ENCODE measurements at regions of chr9 and their contacts with region 1.

Region 1: DNA sequence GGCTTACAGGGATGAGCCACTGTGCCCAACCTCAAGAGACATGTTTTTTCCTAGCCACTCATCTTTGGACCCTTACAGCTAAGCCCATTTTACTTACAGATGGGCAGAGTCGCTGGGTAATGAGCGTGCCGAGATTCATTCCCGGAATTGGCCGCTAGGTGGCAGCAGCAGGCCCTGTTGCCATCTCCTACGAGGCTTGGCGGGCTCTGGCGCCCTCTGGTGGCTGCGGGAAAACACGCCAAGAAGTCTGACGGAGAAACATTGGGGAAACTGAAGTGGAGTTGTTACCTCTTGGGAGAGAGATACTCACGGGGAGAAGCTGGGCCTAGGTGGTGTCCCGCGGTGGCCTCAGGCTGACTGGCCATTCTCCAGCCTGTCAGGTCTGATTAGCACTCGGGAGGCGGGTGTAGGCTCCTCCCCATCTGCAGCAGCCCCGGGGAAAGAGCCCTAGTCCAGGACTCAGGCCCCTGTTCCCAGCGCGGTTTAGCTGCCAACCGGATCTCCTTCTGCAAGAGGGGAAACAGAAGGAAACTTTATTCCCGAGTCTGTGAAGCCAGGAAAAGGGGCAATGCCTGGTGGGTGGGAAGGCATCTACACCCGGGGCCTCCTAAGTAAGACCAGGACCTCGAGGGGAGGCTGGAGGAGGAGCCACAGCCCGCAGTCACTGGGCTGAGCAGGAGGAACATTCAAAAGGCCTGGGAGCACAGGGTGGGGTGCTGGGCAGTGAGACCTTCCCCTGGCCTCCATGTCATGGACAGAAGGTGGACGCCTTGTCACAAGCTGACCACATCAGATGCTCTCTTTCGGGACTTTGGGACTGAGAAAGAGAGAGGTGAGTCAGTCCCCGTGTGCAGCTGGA is 9.7 kb downstream of the PTGES2 start:
- DNase-seq: peak; percentile 92 to 95
- H3K4me3 ChIP-seq: no peak overlapping the region
- H3K27ac ChIP-seq: no peak overlapping the region
- H3K4me1 ChIP-seq: peaks cover 0 to 5% of the 10 kb centered on the region in 2 donors
- H3K27me3 ChIP-seq: no peaks in the 10 kb centered on the region
- CTCF ChIP-seq: peak; percentile 100
- POLR2A ChIP-seq: no peak

Region 2: DNA sequence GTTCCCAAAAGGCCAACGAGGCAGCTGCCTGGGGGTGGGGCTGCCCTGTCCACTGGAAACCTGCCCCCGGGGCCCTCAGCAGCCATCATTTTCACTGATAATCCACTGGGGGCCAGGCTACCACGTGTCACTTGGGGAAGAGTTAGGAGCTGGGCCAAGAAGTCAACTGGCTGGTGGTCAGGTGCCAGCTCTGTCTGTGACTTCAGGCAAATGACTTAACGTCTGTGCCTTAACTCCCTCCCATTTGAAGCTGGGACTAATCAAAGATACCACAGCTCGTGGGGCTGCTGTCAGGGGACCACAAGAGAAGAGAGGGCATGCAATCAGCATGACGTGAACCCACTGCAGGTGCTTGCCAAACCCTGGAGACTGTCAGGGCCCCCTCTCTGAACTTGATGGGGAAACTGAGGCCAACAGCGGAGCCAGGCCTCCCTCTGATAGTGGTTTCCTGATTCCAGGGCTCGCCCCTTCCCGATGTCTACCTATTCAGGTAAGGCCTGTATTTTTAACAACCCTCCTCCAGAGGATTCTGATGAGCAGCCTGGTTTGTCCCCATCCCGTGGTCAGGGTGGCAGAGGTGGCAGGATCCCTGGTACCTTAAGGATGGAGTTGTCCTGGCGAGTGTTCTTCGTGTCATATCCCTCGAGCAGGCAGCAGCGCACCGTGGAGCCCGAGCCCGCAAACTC is 167.9 kb before region 1 on chr9:
- intact Hi-C with region 1: loop called (anchors 5 kb)
- DNase-seq: no peak
- H3K4me3 ChIP-seq: no peak overlapping the region
- H3K27ac ChIP-seq: peak overlapping the region in 1 of 3 donors; percentile 13
- H3K4me1 ChIP-seq: peaks cover 13 to 29% of the 10 kb centered on the region in 2 donors
- H3K27me3 ChIP-seq: no peaks in the 10 kb centered on the region
- CTCF ChIP-seq: no peak
- POLR2A ChIP-seq: no peak

Region 3: GRCh38 chr9:128034821-128035764 is 82.7 kb before region 1 on chr9:
- intact Hi-C with region 1: loop called (anchors 5 kb)
- DNase-seq: peak; percentile 74 to 80
- H3K4me3 ChIP-seq: no peak overlapping the region
- H3K27ac ChIP-seq: peak overlapping the region in 1 of 3 donors; percentile 56
- H3K4me1 ChIP-seq: peaks cover 0 to 3% of the 10 kb centered on the region in 2 donors
- H3K27me3 ChIP-seq: no peaks in the 10 kb centered on the region
- CTCF ChIP-seq: peak; percentile 78 to 97 (median 90)
- POLR2A ChIP-seq: no peak

Region 4: GRCh38 chr9:128175102-128175563 is 57.3 kb after region 1 on chr9:
- intact Hi-C with region 1: no loop called
- DNase-seq: no peak
- H3K4me3 ChIP-seq: no peak overlapping the region
- H3K27ac ChIP-seq: no peak overlapping the region
- H3K4me1 ChIP-seq: no peaks in the 10 kb centered on the region
- H3K27me3 ChIP-seq: no peaks in the 10 kb centered on the region
- CTCF ChIP-seq: no peak
- POLR2A ChIP-seq: no peak

Region 5: DNA sequence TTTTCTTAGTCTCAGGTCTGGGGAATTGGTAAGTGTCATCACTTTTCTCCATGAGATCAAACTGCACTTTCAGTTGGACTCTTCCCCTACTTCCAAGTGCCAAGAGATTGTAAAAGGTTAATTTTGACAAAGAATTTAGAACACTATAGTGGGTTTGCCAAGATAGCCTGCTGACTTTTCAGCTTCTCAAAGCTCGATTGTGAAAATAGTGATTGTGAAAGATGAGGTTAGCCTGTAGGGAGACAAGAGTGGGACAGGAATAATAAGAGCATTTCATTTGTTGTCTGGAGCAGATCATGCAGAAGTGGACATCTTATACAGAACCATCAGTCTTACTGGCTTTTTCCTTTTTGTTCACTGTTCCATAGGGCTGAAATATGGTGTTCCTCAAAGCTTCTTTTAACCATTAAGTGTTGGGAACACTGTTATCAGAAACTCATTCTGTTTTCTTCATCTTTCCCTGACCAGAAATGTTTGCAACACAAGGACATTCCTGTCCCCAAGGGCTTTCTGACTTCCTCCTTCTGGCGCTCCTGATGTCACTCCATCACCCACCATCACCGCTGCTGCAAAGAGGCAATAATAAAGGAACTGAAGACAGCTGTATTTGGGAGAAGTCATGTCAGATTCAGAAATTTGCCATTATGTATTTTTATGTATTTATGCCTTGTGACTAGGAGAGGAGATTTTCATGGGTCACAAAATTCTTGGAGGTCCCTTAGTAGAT is 423.0 kb after region 1 on chr9:
- intact Hi-C with region 1: no loop called
- DNase-seq: no peak
- H3K4me3 ChIP-seq: no peak overlapping the region
- H3K27ac ChIP-seq: no peak overlapping the region
- H3K4me1 ChIP-seq: no peaks in the 10 kb centered on the region
- H3K27me3 ChIP-seq: no peaks in the 10 kb centered on the region
- CTCF ChIP-seq: no peak
- POLR2A ChIP-seq: no peak